Mammary epithelial cell (primary cell): ENCODE measurements at regions of chr20 and their contacts with region 1.

Region 1: GRCh38 chr20:58650776-58651558 is at the start of gene STX16:
- DNase-seq: peak; percentile 95
- H3K4me3 ChIP-seq: peak within 1 kb of the TSS; percentile 77 to 93 (median 91)
- H3K27ac ChIP-seq: peak within 1 kb of the TSS; percentile 84
- H3K4me1 ChIP-seq: peaks cover 19% of the 10 kb centered on the region
- H3K27me3 ChIP-seq: no peaks in the 10 kb centered on the region
- CTCF ChIP-seq: peak; percentile 43 to 58
- total RNA-seq, gene STX16: 34.7 to 71.7 TPM

Region 2: DNA sequence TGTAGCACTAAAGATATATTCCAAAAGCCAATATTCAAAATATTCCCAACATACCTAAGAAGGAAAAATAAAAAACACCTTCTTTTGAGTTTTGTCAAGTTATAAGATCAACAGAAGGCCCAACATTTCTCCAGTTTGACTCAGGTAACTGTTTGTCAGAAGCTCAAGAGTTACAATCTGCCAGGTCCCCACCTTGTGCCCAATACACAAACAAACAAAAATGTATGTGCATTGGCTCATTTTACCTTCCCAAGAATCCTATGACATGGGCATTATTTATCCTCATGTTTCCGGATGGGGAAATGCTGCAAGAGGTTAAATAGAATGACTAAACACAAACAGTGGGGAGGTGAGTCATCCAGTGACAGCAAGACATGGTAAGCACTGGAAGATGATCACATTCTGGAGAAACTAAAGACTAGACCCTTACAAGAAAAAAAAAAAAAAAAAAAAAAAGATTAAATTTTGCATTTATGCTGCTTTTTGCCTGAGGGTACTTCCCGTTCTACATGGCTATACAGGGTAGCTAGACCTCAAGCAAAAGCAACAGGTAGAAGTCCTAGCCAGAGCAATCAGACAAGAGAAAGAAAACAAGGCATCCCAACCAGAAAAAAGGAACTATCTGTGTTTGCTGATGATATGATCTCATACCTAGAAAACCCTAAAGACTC is 398.9 kb before region 1 on chr20:
- CTCF ChIA-PET with region 1: no interaction called
- dilution Hi-C with region 1: no loop called
- in situ Hi-C with region 1: loop called in 1 of 2 experiments (anchors 25 kb)
- intact Hi-C with region 1: no loop called
- DNase-seq: peak; percentile 85
- H3K4me3 ChIP-seq: no peak overlapping the region
- H3K27ac ChIP-seq: peak overlapping the region; percentile 57
- H3K4me1 ChIP-seq: peaks cover 14% of the 10 kb centered on the region
- H3K27me3 ChIP-seq: no peaks in the 10 kb centered on the region
- CTCF ChIP-seq: no peak

Region 3: GRCh38 chr20:58555078-58555765 is 95.7 kb before region 1 on chr20:
- CTCF ChIA-PET with region 1: no interaction called
- dilution Hi-C with region 1: no loop called
- in situ Hi-C with region 1: no loop called
- intact Hi-C with region 1: loop called (anchors 5 kb)
- DNase-seq: peak; percentile 77
- H3K4me3 ChIP-seq: no peak overlapping the region
- H3K27ac ChIP-seq: no peak overlapping the region
- H3K4me1 ChIP-seq: no peaks in the 10 kb centered on the region
- H3K27me3 ChIP-seq: peaks cover 2% of the 10 kb centered on the region
- CTCF ChIP-seq: no peak

Region 4: DNA sequence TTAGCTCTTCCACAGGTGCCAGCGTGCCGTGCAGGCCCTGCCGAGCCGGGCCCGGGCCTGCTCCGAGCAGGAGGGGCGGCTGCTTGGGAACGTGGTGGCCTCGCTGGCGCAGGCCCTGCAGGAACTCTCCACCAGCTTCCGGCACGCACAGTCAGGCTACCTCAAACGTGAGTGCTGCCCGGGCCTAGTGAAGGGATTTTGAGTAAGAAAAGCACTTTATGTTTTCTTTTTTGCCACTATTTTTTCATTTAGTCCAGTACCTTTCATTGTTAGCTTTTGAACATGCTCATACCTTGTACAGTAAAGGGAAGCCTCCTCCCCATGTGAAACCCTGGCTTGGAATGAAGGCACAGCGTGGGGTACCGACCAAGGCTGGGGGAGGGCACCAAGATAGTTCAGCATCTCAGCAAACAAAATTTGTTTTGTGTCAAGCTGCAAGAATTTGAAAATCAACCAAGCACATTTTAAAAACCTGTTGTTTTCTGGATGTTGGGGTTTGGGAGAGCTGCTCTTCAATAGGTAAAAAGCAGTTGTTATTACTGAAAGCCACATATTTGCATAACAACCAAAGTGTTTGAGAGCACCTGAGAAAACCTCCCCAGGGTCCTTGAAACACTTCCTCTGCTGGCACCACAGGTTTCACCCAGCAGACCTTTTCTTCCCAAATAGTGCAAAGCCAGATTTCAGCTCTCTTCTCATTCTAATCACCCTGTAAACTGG is 18.5 kb after region 1 on chr20:
- CTCF ChIA-PET with region 1: interaction called, 27 read pairs
- dilution Hi-C with region 1: no loop called
- in situ Hi-C with region 1: no loop called
- intact Hi-C with region 1: no loop called
- DNase-seq: no peak
- H3K4me3 ChIP-seq: no peak overlapping the region
- H3K27ac ChIP-seq: no peak overlapping the region
- H3K4me1 ChIP-seq: no peaks in the 10 kb centered on the region
- H3K27me3 ChIP-seq: no peaks in the 10 kb centered on the region
- CTCF ChIP-seq: no peak

Region 5: GRCh38 chr20:58888521-58889333 is 237.8 kb after region 1 on chr20:
- CTCF ChIA-PET with region 1: no interaction called
- dilution Hi-C with region 1: no loop called
- in situ Hi-C with region 1: no loop called
- intact Hi-C with region 1: loop called (anchors 5 kb)
- DNase-seq: peak; percentile 73
- H3K4me3 ChIP-seq: peak overlapping the region; percentile 66 to 89 (median 83)
- H3K27ac ChIP-seq: peak overlapping the region; percentile 59
- H3K4me1 ChIP-seq: peaks cover 10% of the 10 kb centered on the region
- H3K27me3 ChIP-seq: no peaks in the 10 kb centered on the region
- CTCF ChIP-seq: no peak